ENCODE measurements at regions of chr6 and their contacts with region 1.

Region 1: GRCh38 chr6:79334674-79335073 is 100.2 kb upstream of the HMGN3 start:
- DNase-seq: no peak
- ATAC-seq: no peak

Region 2: GRCh38 chr6:78427386-78427785 is 907.3 kb before region 1 on chr6:
- intact Hi-C with region 1: loop called (anchors 5 kb)
- DNase-seq: no peak
- ATAC-seq: no peak

Measured in left ventricle myocardium superior (tissue), 1 donor.